CD8-positive, alpha-beta memory T cell (primary cell): ENCODE measurements at regions of chr17 and their contacts with region 1.

Region 1: GRCh38 chr17:41665566-41666236 is 23.0 kb upstream of the EIF1 start:
- DNase-seq: peak; percentile 86 to 91 (median 88)
- H3K4me3 ChIP-seq: peak overlapping the region; percentile 78
- H3K4me3 Mint-ChIP-seq: peak overlapping the region; percentile 87 to 95 (median 89)
- H3K27ac ChIP-seq: peak overlapping the region; percentile 86
- H3K27ac Mint-ChIP-seq: peak overlapping the region; percentile 91 to 100 (median 99)
- H3K4me1 ChIP-seq: peaks cover 14% of the 10 kb centered on the region
- H3K4me1 Mint-ChIP-seq: peaks cover 19 to 29% (median 26%) of the 10 kb centered on the region in 3 donors
- H3K27me3 ChIP-seq: no peaks in the 10 kb centered on the region
- H3K27me3 Mint-ChIP-seq: no peaks in the 10 kb centered on the region

Region 2: GRCh38 chr17:40854159-40854814 is 811.4 kb before region 1 on chr17:
- CTCF ChIA-PET with region 1: interaction called, 25 read pairs
- POLR2A ChIA-PET with region 1: no interaction called
- DNase-seq: no peak
- H3K4me3 ChIP-seq: no peak overlapping the region
- H3K4me3 Mint-ChIP-seq: no peak overlapping the region
- H3K27ac ChIP-seq: no peak overlapping the region
- H3K27ac Mint-ChIP-seq: no peak overlapping the region
- H3K4me1 ChIP-seq: no peaks in the 10 kb centered on the region
- H3K4me1 Mint-ChIP-seq: peaks cover 3 to 4% (median 4%) of the 10 kb centered on the region in 3 donors
- H3K27me3 ChIP-seq: no peaks in the 10 kb centered on the region
- H3K27me3 Mint-ChIP-seq: peaks cover 14 to 45% of the 10 kb centered on the region in 2 donors

Region 3: DNA sequence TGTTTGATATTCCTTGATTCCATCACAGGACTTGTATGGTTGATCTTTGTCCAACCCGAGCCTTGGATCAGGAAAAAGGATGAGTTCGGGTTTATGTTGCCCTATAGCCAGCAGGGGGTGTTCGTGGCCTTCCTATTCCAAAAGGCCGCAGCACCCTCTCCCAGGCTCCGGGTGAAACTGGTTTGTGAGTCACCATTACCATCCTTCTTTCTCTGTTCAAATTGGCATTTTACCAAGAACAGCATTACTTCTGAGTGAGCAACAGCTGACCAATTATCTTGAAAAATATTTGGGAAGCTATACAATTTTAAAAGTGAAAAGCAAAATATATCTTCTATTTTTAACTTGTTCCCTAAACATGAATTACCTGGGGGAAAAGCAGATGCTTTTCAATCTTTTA is 756.4 kb before region 1 on chr17:
- CTCF ChIA-PET with region 1: interaction called, 33 read pairs
- POLR2A ChIA-PET with region 1: interaction called, 4 read pairs
- DNase-seq: peak; percentile 32 to 70 (median 52)
- H3K4me3 ChIP-seq: no peak overlapping the region
- H3K4me3 Mint-ChIP-seq: no peak overlapping the region
- H3K27ac ChIP-seq: no peak overlapping the region
- H3K27ac Mint-ChIP-seq: no peak overlapping the region
- H3K4me1 ChIP-seq: no peaks in the 10 kb centered on the region
- H3K4me1 Mint-ChIP-seq: peaks cover 0 to 2% (median 0%) of the 10 kb centered on the region in 3 donors
- H3K27me3 ChIP-seq: peaks cover 10% of the 10 kb centered on the region
- H3K27me3 Mint-ChIP-seq: peaks cover 18 to 64% of the 10 kb centered on the region in 2 donors

Region 4: GRCh38 chr17:41505809-41506731 is 159.6 kb before region 1 on chr17:
- CTCF ChIA-PET with region 1: no interaction called
- POLR2A ChIA-PET with region 1: no interaction called
- DNase-seq: no peak
- H3K4me3 ChIP-seq: no peak overlapping the region
- H3K4me3 Mint-ChIP-seq: no peak overlapping the region
- H3K27ac ChIP-seq: no peak overlapping the region
- H3K27ac Mint-ChIP-seq: no peak overlapping the region
- H3K4me1 ChIP-seq: no peaks in the 10 kb centered on the region
- H3K4me1 Mint-ChIP-seq: no peaks in the 10 kb centered on the region
- H3K27me3 ChIP-seq: no peaks in the 10 kb centered on the region
- H3K27me3 Mint-ChIP-seq: peaks cover 2 to 11% of the 10 kb centered on the region in 2 donors

Region 5: GRCh38 chr17:41548844-41549595 is 116.7 kb before region 1 on chr17:
- CTCF ChIA-PET with region 1: interaction called, 50 read pairs
- POLR2A ChIA-PET with region 1: no interaction called
- DNase-seq: peak; percentile 73 to 86 (median 76)
- H3K4me3 ChIP-seq: peak overlapping the region; percentile 19
- H3K4me3 Mint-ChIP-seq: peak overlapping the region; percentile 0 to 64 (median 48)
- H3K27ac ChIP-seq: peak overlapping the region; percentile 32
- H3K27ac Mint-ChIP-seq: peak overlapping the region in 7 of 8 donors; percentile 1 to 83 (median 75)
- H3K4me1 ChIP-seq: peaks cover 13% of the 10 kb centered on the region
- H3K4me1 Mint-ChIP-seq: peaks cover 11 to 16% (median 15%) of the 10 kb centered on the region in 3 donors
- H3K27me3 ChIP-seq: no peaks in the 10 kb centered on the region
- H3K27me3 Mint-ChIP-seq: peaks cover 12 to 17% of the 10 kb centered on the region in 2 donors

Region 6: GRCh38 chr17:41678907-41679739 is 13.4 kb after region 1 on chr17:
- CTCF ChIA-PET with region 1: interaction called, 129 read pairs
- POLR2A ChIA-PET with region 1: interaction called, 17 read pairs
- DNase-seq: peak; percentile 27 to 75 (median 52)
- H3K4me3 ChIP-seq: peak overlapping the region; percentile 55
- H3K4me3 Mint-ChIP-seq: peak overlapping the region; percentile 71 to 92 (median 87)
- H3K27ac ChIP-seq: peak overlapping the region; percentile 62
- H3K27ac Mint-ChIP-seq: peak overlapping the region; percentile 80 to 98 (median 96)
- H3K4me1 ChIP-seq: peaks cover 16% of the 10 kb centered on the region
- H3K4me1 Mint-ChIP-seq: peaks cover 20 to 38% (median 24%) of the 10 kb centered on the region in 3 donors
- H3K27me3 ChIP-seq: no peaks in the 10 kb centered on the region
- H3K27me3 Mint-ChIP-seq: peaks cover 0 to 2% of the 10 kb centered on the region in 2 donors

Region 7: DNA sequence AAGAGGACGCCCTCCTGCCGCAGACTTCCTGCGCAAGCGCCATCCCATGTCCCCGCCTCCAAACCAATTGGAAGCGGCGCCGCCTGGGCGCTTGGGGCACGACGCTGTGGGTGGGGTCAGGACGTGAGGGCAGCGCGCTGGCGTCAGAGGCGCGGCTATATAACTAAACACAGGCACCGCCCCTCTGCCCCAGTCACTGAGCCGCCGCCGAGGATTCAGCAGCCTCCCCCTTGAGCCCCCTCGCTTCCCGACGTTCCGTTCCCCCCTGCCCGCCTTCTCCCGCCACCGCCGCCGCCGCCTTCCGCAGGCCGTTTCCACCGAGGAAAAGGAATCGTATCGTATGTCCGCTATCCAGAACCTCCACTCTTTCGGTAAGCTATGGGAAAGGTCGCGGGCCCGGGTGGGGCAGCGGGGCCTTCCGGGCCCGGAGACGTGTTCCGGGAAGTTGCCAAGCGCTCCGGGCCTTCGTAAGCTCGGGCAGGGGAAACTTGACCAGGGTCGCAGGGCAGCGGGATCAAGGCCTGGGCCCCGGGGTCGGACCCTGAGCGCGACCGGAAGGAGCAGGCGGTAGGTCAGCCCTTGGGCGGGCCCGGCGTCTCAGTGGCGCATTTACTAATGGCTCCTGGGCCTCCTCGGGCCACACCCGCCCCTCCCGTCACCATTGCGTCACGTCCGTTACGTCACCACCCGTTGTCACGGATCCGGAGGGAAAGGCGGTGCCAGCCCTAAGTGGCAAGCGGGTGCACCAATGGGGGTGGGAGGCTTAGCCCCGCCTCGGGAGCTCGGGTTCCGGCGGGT is 23.2 kb after region 1 on chr17 and contains the start of gene EIF1:
- CTCF ChIA-PET with region 1: interaction called, 129 read pairs
- POLR2A ChIA-PET with region 1: interaction called, 104 read pairs
- DNase-seq: peak; percentile 99 to 100 (median 99)
- H3K4me3 ChIP-seq: peak within 1 kb of the TSS; percentile 94
- H3K4me3 Mint-ChIP-seq: peak within 1 kb of the TSS; percentile 96 to 100 (median 98)
- H3K27ac ChIP-seq: peak within 1 kb of the TSS; percentile 100
- H3K27ac Mint-ChIP-seq: peak within 1 kb of the TSS; percentile 99 to 100 (median 99)
- H3K4me1 ChIP-seq: peaks cover 31% of the 10 kb centered on the region
- H3K4me1 Mint-ChIP-seq: peaks cover 34 to 47% (median 39%) of the 10 kb centered on the region in 3 donors
- H3K27me3 ChIP-seq: no peaks in the 10 kb centered on the region
- H3K27me3 Mint-ChIP-seq: peaks cover 0 to 15% of the 10 kb centered on the region in 2 donors
- total RNA-seq, gene EIF1: 1,446 to 1,504 TPM

Region 8: DNA sequence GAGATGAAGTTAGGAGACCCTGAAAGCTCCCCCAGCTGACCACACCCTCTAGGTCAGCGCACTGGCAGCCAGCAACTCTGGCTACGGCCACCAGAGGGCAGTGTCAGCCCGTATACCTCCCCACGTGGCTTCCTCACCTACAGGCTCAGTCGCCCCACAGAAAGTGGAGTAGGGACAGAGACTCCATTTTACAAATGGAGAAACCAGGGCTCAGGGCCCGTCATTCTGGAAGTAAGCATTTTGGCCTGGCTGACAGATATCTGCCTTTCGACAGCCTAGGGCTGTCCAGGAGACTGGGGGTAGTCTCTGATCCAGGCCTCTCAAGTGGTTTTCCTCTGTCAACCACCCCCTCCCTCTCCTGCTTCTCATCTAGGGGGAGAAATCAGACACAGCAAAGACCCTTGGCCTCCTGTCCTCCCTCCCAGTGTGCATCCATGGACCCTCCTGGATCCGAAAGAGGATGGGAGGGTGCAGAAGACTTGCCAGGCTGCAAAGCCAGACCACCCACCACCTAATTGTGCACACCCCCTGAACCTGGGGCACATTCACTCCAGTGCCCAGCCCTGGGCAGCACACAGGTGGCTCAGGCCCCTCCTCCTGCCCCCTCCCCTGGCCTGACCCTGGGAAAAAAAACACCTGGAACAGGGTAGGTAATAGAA is 72.5 kb after region 1 on chr17:
- CTCF ChIA-PET with region 1: no interaction called
- POLR2A ChIA-PET with region 1: no interaction called
- DNase-seq: peak; percentile 64 to 81 (median 68)
- H3K4me3 ChIP-seq: no peak overlapping the region
- H3K4me3 Mint-ChIP-seq: no peak overlapping the region
- H3K27ac ChIP-seq: no peak overlapping the region
- H3K27ac Mint-ChIP-seq: no peak overlapping the region
- H3K4me1 ChIP-seq: no peaks in the 10 kb centered on the region
- H3K4me1 Mint-ChIP-seq: peaks cover 0 to 14% (median 2%) of the 10 kb centered on the region in 3 donors
- H3K27me3 ChIP-seq: peaks cover 16% of the 10 kb centered on the region
- H3K27me3 Mint-ChIP-seq: peaks cover 25 to 35% of the 10 kb centered on the region in 2 donors

Region 9: GRCh38 chr17:41777574-41778188 is 112.0 kb after region 1 on chr17:
- CTCF ChIA-PET with region 1: no interaction called
- POLR2A ChIA-PET with region 1: no interaction called
- DNase-seq: no peak
- H3K4me3 ChIP-seq: no peak overlapping the region
- H3K4me3 Mint-ChIP-seq: no peak overlapping the region
- H3K27ac ChIP-seq: no peak overlapping the region
- H3K27ac Mint-ChIP-seq: no peak overlapping the region
- H3K4me1 ChIP-seq: no peaks in the 10 kb centered on the region
- H3K4me1 Mint-ChIP-seq: no peaks in the 10 kb centered on the region
- H3K27me3 ChIP-seq: no peaks in the 10 kb centered on the region
- H3K27me3 Mint-ChIP-seq: peaks cover 4 to 29% of the 10 kb centered on the region in 2 donors